BJ (cell line): ENCODE measurements at regions of chr9 and their contacts with region 1.

Region 1: GRCh38 chr9:107340920-107341632 is 58.0 kb downstream of the RAD23B start:
- DNase-seq: no peak
- H3K4me3 ChIP-seq: no peak overlapping the region
- H3K27me3 ChIP-seq: no peaks in the 10 kb centered on the region
- CTCF ChIP-seq: peak; percentile 91

Region 2: GRCh38 chr9:107137495-107138202 is 203.4 kb before region 1 on chr9:
- CTCF ChIA-PET with region 1: interaction called, 23 read pairs
- POLR2A ChIA-PET with region 1: no interaction called
- DNase-seq: no peak
- H3K4me3 ChIP-seq: no peak overlapping the region
- H3K27me3 ChIP-seq: peaks cover 4% of the 10 kb centered on the region
- CTCF ChIP-seq: peak; percentile 72

Region 3: DNA sequence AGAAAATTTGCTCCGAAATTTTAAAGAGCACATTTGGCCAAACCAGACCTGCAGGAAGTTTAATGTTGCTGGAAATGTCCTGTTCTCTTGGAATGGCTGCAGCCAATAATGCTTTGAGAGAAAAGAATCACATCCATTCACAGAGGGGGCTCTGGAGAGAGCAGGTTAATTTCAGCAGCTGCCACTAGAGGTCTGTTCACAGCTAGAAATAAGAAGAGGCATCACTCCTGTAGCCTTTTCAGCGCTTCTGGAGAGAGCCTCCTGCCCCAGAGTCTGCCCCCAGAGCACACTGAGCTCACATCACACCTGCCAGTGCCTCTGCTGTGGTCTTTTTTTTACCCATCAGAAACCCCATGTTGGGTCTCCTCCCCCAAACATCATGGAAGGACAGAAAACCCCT is 182.8 kb before region 1 on chr9:
- CTCF ChIA-PET with region 1: interaction called, 10 read pairs
- POLR2A ChIA-PET with region 1: no interaction called
- DNase-seq: no peak
- H3K4me3 ChIP-seq: no peak overlapping the region
- H3K27me3 ChIP-seq: no peaks in the 10 kb centered on the region
- CTCF ChIP-seq: peak; percentile 64

Region 4: DNA sequence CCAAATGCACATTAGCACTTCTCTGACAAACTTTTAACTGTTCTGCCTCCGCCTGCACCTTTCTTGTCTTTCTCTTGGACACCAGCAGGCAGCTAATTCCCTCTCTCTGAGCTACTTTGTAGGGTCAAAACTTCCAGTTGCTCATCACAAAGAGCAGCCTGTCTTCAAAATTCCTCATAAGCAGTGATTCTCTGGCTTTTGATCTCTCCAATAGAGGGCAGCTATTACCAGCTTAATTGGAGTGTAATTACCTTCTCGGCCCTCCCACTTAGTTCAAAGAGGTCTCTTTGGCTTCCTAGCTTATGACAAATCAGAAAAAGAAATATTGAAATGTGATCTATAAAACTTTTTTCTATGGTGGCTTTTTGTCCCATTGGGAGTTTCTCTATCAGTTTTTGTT is 101.6 kb before region 1 on chr9:
- CTCF ChIA-PET with region 1: interaction called, 27 read pairs
- POLR2A ChIA-PET with region 1: no interaction called
- DNase-seq: no peak
- H3K4me3 ChIP-seq: no peak overlapping the region
- H3K27me3 ChIP-seq: no peaks in the 10 kb centered on the region
- CTCF ChIP-seq: no peak

Region 5: DNA sequence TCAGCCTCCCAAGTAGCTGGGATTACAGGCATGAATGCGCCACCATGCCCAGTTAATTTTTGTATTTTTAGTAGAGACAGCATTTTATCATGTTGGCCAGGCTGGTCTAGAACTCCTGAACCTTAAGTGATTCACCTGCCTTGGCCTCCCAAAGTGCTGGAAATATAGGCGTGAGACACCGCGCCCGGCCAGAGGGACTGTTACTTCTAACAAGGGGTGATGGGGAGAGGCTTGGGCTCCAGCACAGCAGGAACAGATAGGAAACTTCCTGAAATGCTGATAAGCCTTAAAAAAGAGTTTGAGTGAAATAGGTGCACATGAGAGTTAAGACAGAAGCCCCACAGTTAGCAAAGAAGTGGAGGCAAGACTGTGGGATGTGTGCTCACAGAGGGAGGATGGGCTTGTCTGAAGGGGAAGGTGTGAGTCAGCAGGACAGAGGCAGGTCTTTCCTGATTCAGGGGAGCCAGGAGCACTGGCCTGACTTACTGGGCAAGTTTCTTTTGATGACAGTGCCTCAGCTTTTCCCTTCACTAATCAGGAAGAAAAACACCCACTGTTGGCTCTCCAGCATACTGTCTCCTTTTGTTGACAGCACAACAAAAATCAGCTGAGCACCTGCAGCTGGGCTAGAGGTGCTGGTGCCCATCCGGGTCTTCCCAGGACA is 10.4 kb after region 1 on chr9:
- CTCF ChIA-PET with region 1: interaction called, 22 read pairs
- POLR2A ChIA-PET with region 1: no interaction called
- DNase-seq: no peak
- H3K4me3 ChIP-seq: no peak overlapping the region
- H3K27me3 ChIP-seq: no peaks in the 10 kb centered on the region
- CTCF ChIP-seq: no peak